ENCODE measurements at regions of chr3 and their contacts with region 1.

Region 1: GRCh38 chr3:114527036-114527644 is 233.3 kb downstream of the TIGIT start:
- DNase-seq: no peak
- H3K4me3 ChIP-seq: no peak overlapping the region
- H3K27ac ChIP-seq: no peak overlapping the region
- H3K4me1 ChIP-seq: no peaks in the 10 kb centered on the region
- H3K27me3 ChIP-seq: no peaks in the 10 kb centered on the region
- CTCF ChIP-seq: peak in 1 of 3 donors; percentile 16
- EP300 ChIP-seq: no peak
- POLR2A ChIP-seq: no peak

Region 2: GRCh38 chr3:112721231-112721630 is 1805.9 kb before region 1 on chr3:
- intact Hi-C with region 1: loop called in 1 of 4 experiments (anchors 5 kb)
- DNase-seq: no peak
- H3K4me3 ChIP-seq: no peak overlapping the region
- H3K27ac ChIP-seq: no peak overlapping the region
- H3K4me1 ChIP-seq: no peaks in the 10 kb centered on the region
- H3K27me3 ChIP-seq: no peaks in the 10 kb centered on the region
- CTCF ChIP-seq: no peak
- EP300 ChIP-seq: no peak
- POLR2A ChIP-seq: no peak

Region 3: GRCh38 chr3:114582929-114583328 is 55.8 kb after region 1 on chr3:
- intact Hi-C with region 1: no loop called
- DNase-seq: no peak
- H3K4me3 ChIP-seq: no peak overlapping the region
- H3K27ac ChIP-seq: no peak overlapping the region
- H3K4me1 ChIP-seq: no peaks in the 10 kb centered on the region
- H3K27me3 ChIP-seq: no peaks in the 10 kb centered on the region
- CTCF ChIP-seq: no peak
- EP300 ChIP-seq: no peak
- POLR2A ChIP-seq: no peak

Region 4: DNA sequence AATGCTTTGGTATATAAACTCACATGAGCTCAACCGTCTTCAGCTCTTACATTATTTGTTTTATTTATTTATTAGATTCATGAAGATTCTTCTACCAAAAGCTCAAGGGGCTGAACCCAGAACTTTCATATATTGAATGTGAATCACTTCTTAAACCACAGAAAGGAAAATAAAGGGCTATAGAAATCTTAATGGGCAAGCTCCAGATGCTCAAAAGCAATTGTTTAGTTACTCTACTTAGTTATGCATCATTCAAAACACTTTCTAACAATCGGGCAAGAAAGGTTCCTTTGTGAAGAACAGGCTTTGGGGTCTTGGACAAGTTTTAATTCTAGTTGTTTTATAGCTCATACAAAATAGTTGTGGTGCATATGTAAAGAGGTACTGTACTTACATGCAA is 146.9 kb after region 1 on chr3:
- intact Hi-C with region 1: no loop called
- DNase-seq: no peak
- H3K4me3 ChIP-seq: no peak overlapping the region
- H3K27ac ChIP-seq: no peak overlapping the region
- H3K4me1 ChIP-seq: no peaks in the 10 kb centered on the region
- H3K27me3 ChIP-seq: no peaks in the 10 kb centered on the region
- CTCF ChIP-seq: no peak
- EP300 ChIP-seq: no peak
- POLR2A ChIP-seq: no peak